ENCODE measurements at regions of chr10 and their contacts with region 1.

Region 1: DNA sequence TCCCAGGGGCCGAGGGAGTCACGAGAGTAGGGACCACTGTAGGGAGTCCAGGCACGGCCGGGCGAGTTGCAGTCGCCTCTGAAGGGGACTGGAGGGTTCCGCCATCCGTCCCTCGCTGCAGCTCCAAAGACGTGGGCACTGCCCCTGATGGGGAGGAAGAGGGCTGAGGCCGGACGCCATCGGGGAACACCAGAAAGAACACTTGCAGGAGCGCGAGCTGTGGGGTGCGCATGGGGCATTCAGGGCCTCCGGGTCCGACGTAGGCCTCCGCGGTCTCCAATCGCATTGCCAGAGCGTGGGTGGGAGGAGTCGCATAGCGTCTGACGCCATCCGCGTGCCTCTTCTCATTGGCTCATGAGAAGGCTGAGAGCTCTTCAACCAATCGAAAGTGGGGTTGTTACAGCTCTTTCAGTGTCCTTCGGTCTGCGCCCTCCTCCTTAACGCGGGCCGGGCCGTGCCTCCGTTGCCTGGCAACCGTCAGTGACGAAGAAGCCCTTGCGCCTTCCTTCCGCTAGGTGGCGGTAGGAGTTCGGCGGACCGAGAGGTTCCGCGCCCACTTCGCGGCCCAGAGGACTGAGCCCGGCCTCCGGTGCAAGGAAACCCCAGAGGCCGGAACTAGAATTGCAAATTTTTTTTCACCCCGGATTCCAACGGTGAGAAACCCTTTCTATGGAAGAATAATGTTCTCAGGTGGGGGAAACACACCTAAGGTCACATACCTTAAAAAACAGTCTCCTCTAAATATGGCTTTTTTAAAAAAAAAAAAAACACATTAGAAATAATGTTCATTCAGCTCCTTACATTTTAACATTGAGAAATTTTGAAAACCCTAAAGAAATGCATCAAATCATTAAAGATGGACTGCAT is at the start of gene TCTN3:
- DNase-seq: peak; percentile 97
- H3K4me3 Mint-ChIP-seq: peak within 1 kb of the TSS; percentile 94
- H3K27ac Mint-ChIP-seq: peak within 1 kb of the TSS; percentile 92
- H3K4me1 Mint-ChIP-seq: peaks cover 35% of the 10 kb centered on the region
- H3K27me3 Mint-ChIP-seq: peaks cover 2% of the 10 kb centered on the region
- total RNA-seq, gene TCTN3: 14.3 to 15.6 TPM

Region 2: GRCh38 chr10:95655571-95656290 is 38.2 kb before region 1 on chr10:
- CTCF ChIA-PET with region 1: interaction called, 10 read pairs
- POLR2A ChIA-PET with region 1: no interaction called
- DNase-seq: peak; percentile 10
- H3K4me3 Mint-ChIP-seq: peak overlapping the region; percentile 100
- H3K27ac Mint-ChIP-seq: peak overlapping the region; percentile 93
- H3K4me1 Mint-ChIP-seq: peaks cover 26% of the 10 kb centered on the region
- H3K27me3 Mint-ChIP-seq: no peaks in the 10 kb centered on the region

Region 3: GRCh38 chr10:95675403-95676112 is 18.3 kb before region 1 on chr10:
- CTCF ChIA-PET with region 1: interaction called, 15 read pairs
- POLR2A ChIA-PET with region 1: no interaction called
- DNase-seq: no peak
- H3K4me3 Mint-ChIP-seq: no peak overlapping the region
- H3K27ac Mint-ChIP-seq: no peak overlapping the region
- H3K4me1 Mint-ChIP-seq: no peaks in the 10 kb centered on the region
- H3K27me3 Mint-ChIP-seq: no peaks in the 10 kb centered on the region

Region 4: DNA sequence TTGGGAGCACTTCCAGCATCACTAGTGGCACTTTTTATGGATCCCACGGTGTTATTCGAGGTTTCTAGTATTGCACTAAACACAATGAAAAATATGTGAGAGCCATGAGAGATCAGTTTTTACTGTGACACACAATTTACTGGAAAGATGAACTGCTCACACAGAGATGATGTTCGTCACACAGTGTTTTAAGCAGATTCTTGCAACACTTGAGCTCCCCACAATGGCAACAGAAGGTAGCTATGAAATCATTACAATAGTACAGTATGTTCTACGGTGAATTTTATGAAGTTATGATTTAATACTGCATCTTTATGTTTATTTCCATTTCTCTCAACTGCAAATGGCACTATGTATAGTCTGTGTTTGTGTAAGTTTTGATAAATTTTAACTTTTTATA is 34.6 kb after region 1 on chr10:
- CTCF ChIA-PET with region 1: interaction called, 10 read pairs
- POLR2A ChIA-PET with region 1: no interaction called
- DNase-seq: no peak
- H3K4me3 Mint-ChIP-seq: no peak overlapping the region
- H3K27ac Mint-ChIP-seq: no peak overlapping the region
- H3K4me1 Mint-ChIP-seq: no peaks in the 10 kb centered on the region
- H3K27me3 Mint-ChIP-seq: peaks cover 22% of the 10 kb centered on the region

Region 5: DNA sequence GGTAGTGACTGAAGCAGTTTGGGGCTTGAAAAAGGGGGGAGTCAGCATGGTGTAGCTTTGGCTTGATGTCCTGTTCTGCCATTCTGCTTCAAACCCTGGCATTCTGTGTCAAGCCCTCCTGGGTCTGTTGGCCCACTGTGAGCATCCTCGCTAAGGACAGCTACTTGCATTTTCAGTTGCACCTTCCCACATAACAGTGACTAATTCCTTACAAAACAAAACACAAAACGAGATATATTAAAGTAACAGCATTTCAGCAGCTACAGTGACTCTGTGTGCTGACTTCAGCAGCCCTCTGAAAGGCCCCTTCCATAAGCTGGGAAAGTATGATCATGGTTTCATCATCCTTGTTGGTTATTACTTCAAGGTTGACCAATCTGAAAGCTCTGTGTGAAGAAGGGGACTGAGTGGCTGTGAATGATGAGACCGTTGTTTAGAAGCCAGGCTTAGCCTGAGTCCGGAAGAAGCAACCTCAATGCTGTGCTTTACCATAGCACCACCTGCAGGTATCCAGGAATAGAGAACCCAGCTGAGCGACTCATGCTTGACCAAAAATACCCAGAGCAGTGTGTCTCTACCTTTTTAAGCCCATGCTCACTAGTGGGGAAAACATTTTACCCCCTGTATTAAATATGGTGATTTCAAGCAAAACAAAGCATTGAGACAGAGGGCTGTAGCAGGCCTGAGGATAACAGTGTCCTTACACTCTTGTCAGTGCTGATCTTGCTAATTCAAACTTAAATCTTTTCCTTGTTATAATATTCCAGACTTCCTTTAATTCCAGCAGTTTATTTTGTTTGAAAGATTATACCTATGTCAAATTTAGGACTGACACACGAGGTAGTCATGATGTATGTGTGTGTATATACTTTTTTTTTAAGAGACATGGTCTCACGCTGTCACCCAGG is 171.3 kb after region 1 on chr10:
- CTCF ChIA-PET with region 1: interaction called, 47 read pairs
- POLR2A ChIA-PET with region 1: interaction called, 3 read pairs
- DNase-seq: peak; percentile 55
- H3K4me3 Mint-ChIP-seq: no peak overlapping the region
- H3K27ac Mint-ChIP-seq: peak overlapping the region; percentile 0
- H3K4me1 Mint-ChIP-seq: peaks cover 14% of the 10 kb centered on the region
- H3K27me3 Mint-ChIP-seq: no peaks in the 10 kb centered on the region

Measured in activated CD4-positive, alpha-beta T cell treated with anti-CD3 and anti-CD28 coated beads, Interleukin-2, amount 10 ng/mL, durations not matched to agents 7 days and 5 days (primary cell).